Activated CD8-positive, alpha-beta T cell treated with anti-CD3 and anti-CD28 coated beads for 36 hours (primary cell): ENCODE measurements at regions of chr9 and their contacts with region 1.

Region 1: DNA sequence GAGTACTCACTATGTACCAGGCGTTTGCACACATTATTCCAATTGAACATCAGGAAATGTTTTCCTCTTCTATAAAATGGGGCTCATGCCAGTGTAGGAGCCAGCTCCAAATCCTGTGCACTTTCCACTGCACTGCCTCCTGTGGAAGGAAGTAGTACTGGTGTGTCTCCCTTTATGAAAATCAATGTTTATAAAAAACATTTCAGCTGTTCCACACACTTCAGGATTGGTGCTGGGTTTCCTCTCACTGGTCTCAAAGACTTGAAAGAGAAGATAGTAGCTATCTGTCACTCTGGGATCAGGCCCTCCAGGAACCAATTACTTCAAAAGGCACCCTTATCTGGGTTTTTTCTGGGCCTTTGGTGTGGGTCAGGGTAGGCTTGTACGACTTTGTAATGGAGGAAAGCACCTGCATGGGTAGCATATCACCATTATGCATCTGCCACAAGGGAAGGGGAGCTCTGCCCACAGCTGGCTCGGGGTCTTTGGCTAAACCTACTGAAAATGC is 32.5 kb downstream of the RAB14 start:
- DNase-seq: peak; percentile 25
- ATAC-seq: peak; percentile 76
- H3K4me3 Mint-ChIP-seq: no peak overlapping the region
- H3K27ac Mint-ChIP-seq: peak overlapping the region; percentile 56
- H3K4me1 Mint-ChIP-seq: peaks cover 20% of the 10 kb centered on the region
- H3K27me3 Mint-ChIP-seq: no peaks in the 10 kb centered on the region
- CTCF ChIP-seq: peak; percentile 44

Region 2: GRCh38 chr9:121156263-121156731 is 12.9 kb before region 1 on chr9:
- CTCF ChIA-PET with region 1: interaction called, 15 read pairs
- POLR2A ChIA-PET with region 1: interaction called, 6 read pairs
- intact Hi-C with region 1: no loop called
- DNase-seq: peak; percentile 28
- ATAC-seq: peak; percentile 92
- H3K4me3 Mint-ChIP-seq: peak overlapping the region; percentile 11
- H3K27ac Mint-ChIP-seq: peak overlapping the region; percentile 88
- H3K4me1 Mint-ChIP-seq: peaks cover 43% of the 10 kb centered on the region
- H3K27me3 Mint-ChIP-seq: no peaks in the 10 kb centered on the region
- CTCF ChIP-seq: no peak